Activated B cell treated with CpG ODN at 0.5 μM for 24 hours (primary cell): ENCODE measurements at regions of chr6 and their contacts with region 1.

Region 1: GRCh38 chr6:14066782-14067406 is 50.7 kb upstream of the CD83 start:
- DNase-seq: no peak
- ATAC-seq: peak; percentile 88
- H3K4me3 Mint-ChIP-seq: peak overlapping the region; percentile 42
- H3K27ac Mint-ChIP-seq: peak overlapping the region; percentile 74
- H3K4me1 Mint-ChIP-seq: peaks cover 37% of the 10 kb centered on the region
- H3K27me3 Mint-ChIP-seq: no peaks in the 10 kb centered on the region
- CTCF ChIP-seq: no peak

Region 2: DNA sequence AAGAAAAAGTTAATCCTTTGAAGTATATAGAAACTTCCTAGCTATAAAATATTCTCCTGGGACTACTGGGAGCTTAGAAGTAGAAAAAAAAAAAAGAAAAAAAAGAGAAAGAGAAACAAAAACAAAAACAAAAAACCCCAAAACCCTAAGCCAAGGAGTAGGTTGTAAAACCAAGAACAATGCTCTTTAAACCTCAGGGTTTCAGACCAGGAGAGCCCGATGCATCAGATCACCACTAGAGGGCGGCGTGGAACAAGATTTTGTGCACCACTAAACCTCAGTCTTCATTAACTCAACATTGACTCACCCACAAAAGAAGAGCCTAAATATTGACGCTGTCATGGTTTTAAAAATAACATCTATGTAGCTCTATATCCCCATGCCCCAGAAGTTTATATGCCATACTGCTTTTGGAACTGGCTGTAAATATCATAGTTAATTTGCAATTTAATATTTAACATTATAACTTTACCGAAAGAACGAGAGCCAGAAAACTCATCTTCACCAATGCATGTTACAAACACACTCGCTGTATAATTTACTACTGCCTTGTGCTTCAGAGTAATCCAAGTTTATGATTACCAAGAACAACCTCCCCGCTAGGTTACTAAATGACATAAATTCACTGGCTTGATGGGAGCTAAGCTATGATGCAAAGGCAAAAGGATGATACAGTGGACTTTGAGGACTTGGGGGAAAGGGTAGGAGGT is 271.7 kb before region 1 on chr6:
- CTCF ChIA-PET with region 1: interaction called, 12 read pairs
- POLR2A ChIA-PET with region 1: no interaction called
- intact Hi-C with region 1: loop called (anchors 1 kb)
- DNase-seq: peak; percentile 57
- ATAC-seq: peak; percentile 98
- H3K4me3 Mint-ChIP-seq: no peak overlapping the region
- H3K27ac Mint-ChIP-seq: no peak overlapping the region
- H3K4me1 Mint-ChIP-seq: peaks cover 7% of the 10 kb centered on the region
- H3K27me3 Mint-ChIP-seq: no peaks in the 10 kb centered on the region
- CTCF ChIP-seq: peak; percentile 68

Region 3: GRCh38 chr6:13908955-13909381 is 157.9 kb before region 1 on chr6:
- CTCF ChIA-PET with region 1: interaction called, 168 read pairs
- POLR2A ChIA-PET with region 1: interaction called, 11 read pairs
- intact Hi-C with region 1: loop called (anchors 1 kb)
- DNase-seq: no peak
- ATAC-seq: peak; percentile 80
- H3K4me3 Mint-ChIP-seq: no peak overlapping the region
- H3K27ac Mint-ChIP-seq: no peak overlapping the region
- H3K4me1 Mint-ChIP-seq: peaks cover 5% of the 10 kb centered on the region
- H3K27me3 Mint-ChIP-seq: peaks cover 4% of the 10 kb centered on the region
- CTCF ChIP-seq: peak; percentile 91

Region 4: GRCh38 chr6:14095437-14095836 is 28.5 kb after region 1 on chr6:
- CTCF ChIA-PET with region 1: interaction called, 20 read pairs
- POLR2A ChIA-PET with region 1: interaction called, 349 read pairs
- intact Hi-C with region 1: loop called (anchors 1 kb)
- DNase-seq: peak; percentile 72
- ATAC-seq: peak; percentile 73
- H3K4me3 Mint-ChIP-seq: peak overlapping the region; percentile 85
- H3K27ac Mint-ChIP-seq: peak overlapping the region; percentile 100
- H3K4me1 Mint-ChIP-seq: peaks cover 96% of the 10 kb centered on the region
- H3K27me3 Mint-ChIP-seq: no peaks in the 10 kb centered on the region
- CTCF ChIP-seq: no peak

Region 5: GRCh38 chr6:14117158-14118090 is 50.5 kb after region 1 on chr6 and contains the start of gene CD83:
- CTCF ChIA-PET with region 1: interaction called, 40 read pairs
- POLR2A ChIA-PET with region 1: interaction called, 190 read pairs
- intact Hi-C with region 1: loop called (anchors 1 kb)
- DNase-seq: peak; percentile 91
- ATAC-seq: peak; percentile 72
- H3K4me3 Mint-ChIP-seq: peak within 1 kb of the TSS; percentile 95
- H3K27ac Mint-ChIP-seq: peak within 1 kb of the TSS; percentile 94
- H3K4me1 Mint-ChIP-seq: peaks cover 47% of the 10 kb centered on the region
- H3K27me3 Mint-ChIP-seq: no peaks in the 10 kb centered on the region
- CTCF ChIP-seq: no peak
- total RNA-seq, gene CD83: 483 and 492 TPM in 2 replicates

Region 6: GRCh38 chr6:14135893-14136539 is 69.1 kb after region 1 on chr6:
- CTCF ChIA-PET with region 1: interaction called, 45 read pairs
- POLR2A ChIA-PET with region 1: interaction called, 37 read pairs
- intact Hi-C with region 1: no loop called
- DNase-seq: no peak
- ATAC-seq: no peak
- H3K4me3 Mint-ChIP-seq: no peak overlapping the region
- H3K27ac Mint-ChIP-seq: peak overlapping the region; percentile 73
- H3K4me1 Mint-ChIP-seq: peaks cover 65% of the 10 kb centered on the region
- H3K27me3 Mint-ChIP-seq: no peaks in the 10 kb centered on the region
- CTCF ChIP-seq: no peak

Region 7: GRCh38 chr6:15621203-15622044 is 1554.5 kb after region 1 on chr6:
- CTCF ChIA-PET with region 1: interaction called, 3 read pairs
- POLR2A ChIA-PET with region 1: no interaction called
- intact Hi-C with region 1: loop called (anchors 10 kb)
- DNase-seq: no peak
- ATAC-seq: peak; percentile 79
- H3K4me3 Mint-ChIP-seq: no peak overlapping the region
- H3K27ac Mint-ChIP-seq: peak overlapping the region; percentile 38
- H3K4me1 Mint-ChIP-seq: peaks cover 34% of the 10 kb centered on the region
- H3K27me3 Mint-ChIP-seq: no peaks in the 10 kb centered on the region
- CTCF ChIP-seq: no peak